Mammary epithelial cell (primary cell): ENCODE measurements at regions of chr13 and their contacts with region 1.

Region 1: GRCh38 chr13:99386911-99387788 is 80.0 kb upstream of the GPR183 start:
- DNase-seq: peak; percentile 11
- H3K4me3 ChIP-seq: no peak overlapping the region
- H3K27ac ChIP-seq: no peak overlapping the region
- H3K4me1 ChIP-seq: no peaks in the 10 kb centered on the region
- H3K27me3 ChIP-seq: no peaks in the 10 kb centered on the region
- CTCF ChIP-seq: peak; percentile 64 to 73

Region 2: DNA sequence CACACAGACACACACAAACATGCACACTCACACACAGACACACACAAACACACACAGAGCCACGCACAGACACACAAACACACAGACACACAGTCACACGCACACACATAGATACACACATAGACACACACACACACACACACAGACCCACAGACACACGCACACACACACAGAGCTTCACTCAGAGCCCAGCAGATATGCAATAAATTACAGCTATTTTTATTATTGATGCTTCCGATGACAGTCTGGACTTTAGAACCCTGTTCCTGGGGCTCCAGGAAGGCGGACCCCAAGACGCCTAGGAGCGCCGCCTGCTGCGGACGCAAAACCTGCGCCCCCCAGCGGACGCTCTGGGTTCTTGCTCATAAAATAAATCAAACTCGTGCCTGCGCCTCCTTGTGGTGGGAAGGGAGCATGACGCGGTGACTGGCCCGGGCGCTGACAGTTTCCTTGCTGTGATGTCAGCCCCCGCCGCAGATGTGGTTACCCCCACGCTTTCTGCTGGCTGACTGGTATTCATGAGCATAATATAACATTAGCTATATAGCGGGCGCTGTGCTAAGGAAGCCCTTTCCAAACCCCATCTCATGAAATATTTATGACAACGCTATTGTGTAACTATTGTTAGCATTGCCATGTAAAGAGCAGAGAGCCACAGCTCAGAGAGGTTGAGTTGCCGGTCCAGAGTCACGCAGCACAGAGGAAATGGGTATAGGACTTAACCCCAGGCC is 49.7 kb after region 1 on chr13:
- CTCF ChIA-PET with region 1: no interaction called
- dilution Hi-C with region 1: no loop called
- in situ Hi-C with region 1: no loop called
- intact Hi-C with region 1: loop called (anchors 1 kb)
- DNase-seq: peak; percentile 68
- H3K4me3 ChIP-seq: peak overlapping the region in 1 of 3 experiments; percentile 18
- H3K27ac ChIP-seq: no peak overlapping the region
- H3K4me1 ChIP-seq: peaks cover 10% of the 10 kb centered on the region
- H3K27me3 ChIP-seq: no peaks in the 10 kb centered on the region
- CTCF ChIP-seq: peak; percentile 99 to 100